ENCODE measurements at regions of chr2 and their contacts with region 1.

Region 1: GRCh38 chr2:48471048-48471474 is 58.9 kb upstream of the STON1 start:
- DNase-seq: peak; percentile 39
- H3K4me3 Mint-ChIP-seq: no peak overlapping the region
- H3K27ac Mint-ChIP-seq: no peak overlapping the region
- H3K4me1 Mint-ChIP-seq: peaks cover 9% of the 10 kb centered on the region
- H3K27me3 Mint-ChIP-seq: no peaks in the 10 kb centered on the region
- CTCF ChIP-seq: peak; percentile 38

Region 2: DNA sequence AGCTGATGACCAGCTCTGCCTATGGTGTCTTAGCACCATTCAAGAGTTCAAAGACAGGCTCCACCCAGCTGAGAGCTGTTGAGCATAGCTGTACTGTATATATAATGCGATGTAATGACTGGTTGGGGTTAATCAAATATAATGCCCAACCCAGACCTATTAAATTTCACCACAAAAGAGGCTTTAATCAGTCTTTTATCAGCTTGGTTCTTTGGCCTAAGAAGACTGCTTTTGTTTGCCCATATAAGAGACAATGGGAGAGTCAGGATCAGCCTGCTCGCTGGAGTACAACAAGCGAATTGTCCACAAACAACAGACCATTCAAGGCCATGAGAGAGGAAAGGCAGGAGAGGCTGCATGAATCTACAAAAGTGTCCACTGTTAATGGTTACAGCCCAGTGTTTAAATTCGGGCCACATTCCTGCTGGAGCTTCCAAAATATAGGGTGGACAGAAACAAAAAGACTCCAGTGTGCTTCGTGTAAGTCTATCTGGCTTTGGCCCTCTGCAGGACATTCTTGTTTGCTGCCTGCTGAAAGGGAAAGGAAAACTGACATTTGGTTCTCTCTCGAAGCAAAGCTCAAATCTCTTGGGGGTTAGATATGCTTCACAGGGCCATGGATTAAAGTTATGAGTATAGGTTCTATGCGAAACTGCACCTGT is 265.8 kb before region 1 on chr2:
- CTCF ChIA-PET with region 1: no interaction called
- intact Hi-C with region 1: no loop called
- DNase-seq: no peak
- H3K4me3 Mint-ChIP-seq: no peak overlapping the region
- H3K27ac Mint-ChIP-seq: no peak overlapping the region
- H3K4me1 Mint-ChIP-seq: peaks cover 8% of the 10 kb centered on the region
- H3K27me3 Mint-ChIP-seq: no peaks in the 10 kb centered on the region
- CTCF ChIP-seq: no peak

Region 3: DNA sequence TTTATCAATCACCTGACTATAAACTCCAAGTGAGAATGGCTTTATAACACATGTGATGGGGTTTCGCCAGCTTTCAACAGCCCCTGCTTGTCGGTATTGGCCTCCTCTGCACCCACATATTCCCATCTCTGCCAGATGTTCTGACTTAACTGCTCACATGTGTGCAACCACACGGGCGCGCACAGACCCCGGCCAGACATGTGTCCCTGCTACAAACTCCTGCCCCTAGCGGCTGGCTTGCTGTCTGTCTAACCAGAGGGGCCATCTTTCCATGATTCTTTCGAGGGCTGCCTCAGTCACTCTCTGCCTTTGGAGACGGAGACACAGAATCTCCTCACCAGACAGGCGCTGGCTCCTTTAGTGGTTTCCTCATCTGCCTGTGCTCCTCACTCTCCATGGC is 74.2 kb after region 1 on chr2:
- CTCF ChIA-PET with region 1: no interaction called
- intact Hi-C with region 1: no loop called
- DNase-seq: no peak
- H3K4me3 Mint-ChIP-seq: no peak overlapping the region
- H3K27ac Mint-ChIP-seq: no peak overlapping the region
- H3K4me1 Mint-ChIP-seq: no peaks in the 10 kb centered on the region
- H3K27me3 Mint-ChIP-seq: no peaks in the 10 kb centered on the region
- CTCF ChIP-seq: no peak

Region 4: GRCh38 chr2:48589170-48589767 is 118.2 kb after region 1 on chr2:
- CTCF ChIA-PET with region 1: interaction called, 3 read pairs
- intact Hi-C with region 1: loop called (anchors 10 kb)
- DNase-seq: peak; percentile 46
- H3K4me3 Mint-ChIP-seq: no peak overlapping the region
- H3K27ac Mint-ChIP-seq: no peak overlapping the region
- H3K4me1 Mint-ChIP-seq: peaks cover 8% of the 10 kb centered on the region
- H3K27me3 Mint-ChIP-seq: no peaks in the 10 kb centered on the region
- CTCF ChIP-seq: peak; percentile 77